ENCODE measurements at regions of chr2 and their contacts with region 1.

Region 1: GRCh38 chr2:222318026-222318711 is 19.4 kb upstream of the PAX3 start:
- DNase-seq: peak; percentile 72 to 88
- H3K4me3 ChIP-seq: peak overlapping the region; percentile 42 to 58 (median 52)
- H3K27ac ChIP-seq: peak overlapping the region in 1 of 5 donors; percentile 27
- H3K4me1 ChIP-seq: peaks cover 20 to 30% (median 25%) of the 10 kb centered on the region in 4 donors
- H3K27me3 ChIP-seq: peaks cover 6 to 96% (median 35%) of the 10 kb centered on the region in 3 donors
- CTCF ChIP-seq: peak in 5 of 7 experiments; percentile 5 to 36 (median 26)
- EP300 ChIP-seq: no peak
- POLR2A ChIP-seq: no peak

Region 2: GRCh38 chr2:222561817-222562645 is 243.9 kb after region 1 on chr2:
- intact Hi-C with region 1: loop called (anchors 10 kb)
- DNase-seq: peak; percentile 40 to 82
- H3K4me3 ChIP-seq: no peak overlapping the region
- H3K27ac ChIP-seq: no peak overlapping the region
- H3K4me1 ChIP-seq: no peaks in the 10 kb centered on the region
- H3K27me3 ChIP-seq: peaks cover 0 to 3% (median 0%) of the 10 kb centered on the region in 3 donors
- CTCF ChIP-seq: peak in 5 of 7 experiments; percentile 30 to 61 (median 49)
- EP300 ChIP-seq: no peak
- POLR2A ChIP-seq: no peak

Region 3: DNA sequence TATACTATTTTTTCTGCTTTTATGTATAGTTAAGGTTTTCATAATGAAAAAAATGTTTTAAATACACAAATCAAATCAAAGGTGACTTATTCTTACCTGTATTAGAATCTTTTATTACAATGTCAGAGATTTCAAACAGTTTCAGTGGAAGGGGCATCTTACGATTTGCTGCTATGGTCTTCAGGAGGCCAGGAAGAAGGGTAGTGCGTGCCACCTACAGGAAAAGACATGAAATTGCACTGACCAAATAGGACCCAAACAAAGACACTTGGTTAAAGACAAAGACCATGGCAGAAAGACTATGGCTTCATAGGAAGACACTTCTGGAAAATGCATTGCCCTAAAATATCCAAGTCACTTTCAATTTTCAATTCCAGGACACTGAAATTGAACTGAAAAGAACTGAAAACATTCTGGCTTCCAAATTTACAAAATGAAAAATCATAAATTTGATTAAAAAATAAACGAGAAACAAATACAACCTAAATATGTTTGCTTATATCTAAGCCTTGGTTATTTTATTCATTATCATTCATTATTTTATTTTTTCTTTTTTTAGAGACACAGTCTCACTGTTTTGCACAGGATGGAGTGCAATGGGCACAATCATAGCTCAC is 295.7 kb after region 1 on chr2:
- intact Hi-C with region 1: loop called (anchors 10 kb)
- DNase-seq: peak in 1 of 2 donors; percentile 66
- H3K4me3 ChIP-seq: no peak overlapping the region
- H3K27ac ChIP-seq: no peak overlapping the region
- H3K4me1 ChIP-seq: no peaks in the 10 kb centered on the region
- H3K27me3 ChIP-seq: no peaks in the 10 kb centered on the region
- CTCF ChIP-seq: peak in 5 of 7 experiments; percentile 47 to 67 (median 60)
- EP300 ChIP-seq: no peak
- POLR2A ChIP-seq: no peak